Activated CD8-positive, alpha-beta T cell treated with anti-CD3 and anti-CD28 coated beads, Interleukin-2, amount 10 ng/mL, durations not matched to agents 7 days and 5 days (primary cell): ENCODE measurements at regions of chr1 and their contacts with region 1.

Region 1: GRCh38 chr1:153796791-153797659 is 21.8 kb downstream of the SLC27A3 start:
- DNase-seq: peak; percentile 93
- ATAC-seq: peak; percentile 83
- H3K4me3 Mint-ChIP-seq: no peak overlapping the region
- H3K27ac Mint-ChIP-seq: peak overlapping the region; percentile 79
- H3K4me1 Mint-ChIP-seq: peaks cover 58% of the 10 kb centered on the region
- H3K27me3 Mint-ChIP-seq: no peaks in the 10 kb centered on the region

Region 2: DNA sequence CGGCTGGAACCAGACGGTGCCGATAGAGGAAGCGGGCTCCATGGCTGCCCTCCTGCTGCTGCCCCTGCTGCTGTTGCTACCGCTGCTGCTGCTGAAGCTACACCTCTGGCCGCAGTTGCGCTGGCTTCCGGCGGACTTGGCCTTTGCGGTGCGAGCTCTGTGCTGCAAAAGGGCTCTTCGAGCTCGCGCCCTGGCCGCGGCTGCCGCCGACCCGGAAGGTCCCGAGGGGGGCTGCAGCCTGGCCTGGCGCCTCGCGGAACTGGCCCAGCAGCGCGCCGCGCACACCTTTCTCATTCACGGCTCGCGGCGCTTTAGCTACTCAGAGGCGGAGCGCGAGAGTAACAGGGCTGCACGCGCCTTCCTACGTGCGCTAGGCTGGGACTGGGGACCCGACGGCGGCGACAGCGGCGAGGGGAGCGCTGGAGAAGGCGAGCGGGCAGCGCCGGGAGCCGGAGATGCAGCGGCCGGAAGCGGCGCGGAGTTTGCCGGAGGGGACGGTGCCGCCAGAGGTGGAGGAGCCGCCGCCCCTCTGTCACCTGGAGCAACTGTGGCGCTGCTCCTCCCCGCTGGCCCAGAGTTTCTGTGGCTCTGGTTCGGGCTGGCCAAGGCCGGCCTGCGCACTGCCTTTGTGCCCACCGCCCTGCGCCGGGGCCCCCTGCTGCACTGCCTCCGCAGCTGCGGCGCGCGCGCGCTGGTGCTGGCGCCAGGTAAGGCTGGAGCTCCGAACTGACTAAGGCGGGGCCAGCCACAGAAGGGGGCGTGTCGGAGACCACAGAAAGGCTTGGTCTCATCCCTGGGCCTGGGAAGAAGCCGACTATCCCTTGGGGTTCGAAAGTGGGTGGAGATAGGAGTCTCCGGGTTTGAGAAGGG is 21.3 kb before region 1 on chr1:
- CTCF ChIA-PET with region 1: interaction called, 11 read pairs
- POLR2A ChIA-PET with region 1: interaction called, 3 read pairs
- DNase-seq: peak; percentile 80
- ATAC-seq: peak; percentile 74
- H3K4me3 Mint-ChIP-seq: peak overlapping the region; percentile 85
- H3K27ac Mint-ChIP-seq: peak overlapping the region; percentile 97
- H3K4me1 Mint-ChIP-seq: peaks cover 55% of the 10 kb centered on the region
- H3K27me3 Mint-ChIP-seq: no peaks in the 10 kb centered on the region

Region 3: DNA sequence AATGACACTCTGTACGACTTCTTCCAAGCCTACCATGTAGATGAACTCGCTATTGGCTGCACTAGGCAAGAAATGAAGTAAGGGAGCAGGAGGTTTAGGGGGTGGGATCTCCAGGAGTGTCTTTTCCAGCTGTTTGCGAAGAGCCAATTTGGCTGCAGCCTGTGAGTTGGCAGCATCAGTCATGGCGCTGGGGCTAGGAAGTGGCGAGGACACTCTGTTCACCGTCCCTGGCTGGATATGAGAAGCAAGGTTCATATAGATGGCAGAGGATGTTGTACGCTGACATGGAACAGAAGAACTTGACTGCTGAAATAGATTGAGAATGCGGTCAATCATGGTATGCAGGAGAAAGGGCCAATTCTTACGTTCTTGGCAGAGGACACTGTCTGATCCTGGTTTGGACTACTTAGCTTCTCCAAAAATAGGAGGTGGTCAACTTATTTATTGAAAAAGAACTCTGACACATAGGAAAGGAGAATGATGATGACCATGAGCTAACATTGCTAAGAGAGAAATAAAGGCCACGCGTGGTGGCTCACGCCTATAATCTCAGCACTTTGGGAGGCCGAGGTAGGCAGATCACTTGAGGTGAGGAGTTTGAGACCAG is 19.4 kb after region 1 on chr1:
- CTCF ChIA-PET with region 1: interaction called, 14 read pairs
- POLR2A ChIA-PET with region 1: interaction called, 3 read pairs
- DNase-seq: no peak
- ATAC-seq: no peak
- H3K4me3 Mint-ChIP-seq: no peak overlapping the region
- H3K27ac Mint-ChIP-seq: no peak overlapping the region
- H3K4me1 Mint-ChIP-seq: peaks cover 2% of the 10 kb centered on the region
- H3K27me3 Mint-ChIP-seq: no peaks in the 10 kb centered on the region

Region 4: DNA sequence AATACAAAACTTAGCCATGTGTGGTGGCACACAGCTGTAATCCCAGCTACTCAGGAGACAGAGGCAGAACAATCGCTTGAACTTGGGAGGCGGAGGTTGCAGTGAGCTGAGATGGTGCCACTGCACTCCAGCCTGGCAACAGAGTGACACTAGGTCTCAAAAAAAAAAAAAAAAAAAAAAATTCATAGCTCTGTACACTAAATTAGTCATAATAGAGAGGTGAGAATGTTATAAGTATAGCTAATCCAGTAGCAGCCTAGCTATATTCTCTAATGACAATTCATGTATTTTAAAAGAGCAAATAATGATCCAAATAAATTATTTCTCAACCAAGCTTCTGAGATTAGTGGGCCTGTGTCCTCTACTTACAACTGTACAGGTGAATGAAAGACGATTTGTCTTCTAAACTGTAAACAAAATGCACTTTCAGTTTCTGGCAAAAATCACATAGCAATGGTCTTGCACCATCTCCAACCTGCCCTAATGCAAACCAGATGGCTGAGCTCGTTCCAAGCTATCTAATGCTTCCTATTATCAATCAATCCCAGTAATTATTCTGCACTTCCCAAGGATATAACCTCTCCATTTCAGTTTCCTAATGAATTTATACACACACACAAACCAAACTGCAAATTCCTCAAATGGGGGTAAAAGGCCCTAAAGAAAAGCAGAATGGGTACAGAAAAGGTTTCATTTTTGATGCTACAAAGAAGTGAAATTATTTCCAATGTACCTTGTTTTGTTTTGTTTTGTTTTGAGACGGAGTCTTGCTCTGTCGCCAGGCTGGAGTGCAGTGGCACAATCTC is 69.2 kb after region 1 on chr1:
- CTCF ChIA-PET with region 1: no interaction called
- POLR2A ChIA-PET with region 1: no interaction called
- DNase-seq: no peak
- ATAC-seq: no peak
- H3K4me3 Mint-ChIP-seq: no peak overlapping the region
- H3K27ac Mint-ChIP-seq: no peak overlapping the region
- H3K4me1 Mint-ChIP-seq: peaks cover 23% of the 10 kb centered on the region
- H3K27me3 Mint-ChIP-seq: no peaks in the 10 kb centered on the region